ENCODE measurements at regions of chr17 and their contacts with region 1.

Region 1: GRCh38 chr17:65055348-65056261 is 935 bp downstream of the GNA13 start:
- DNase-seq: peak; percentile 56 to 58
- H3K4me3 ChIP-seq: peak overlapping the region; percentile 99
- H3K4me3 Mint-ChIP-seq: peak overlapping the region; percentile 98
- H3K27ac Mint-ChIP-seq: peak overlapping the region; percentile 92
- H3K4me1 ChIP-seq: peaks cover 15% of the 10 kb centered on the region; the same call in 1 of the 2 replicates
- H3K4me1 Mint-ChIP-seq: peaks cover 6% of the 10 kb centered on the region
- H3K27me3 ChIP-seq: no peaks in the 10 kb centered on the region
- H3K27me3 Mint-ChIP-seq: no peaks in the 10 kb centered on the region
- CTCF ChIP-seq: no peak

Region 2: DNA sequence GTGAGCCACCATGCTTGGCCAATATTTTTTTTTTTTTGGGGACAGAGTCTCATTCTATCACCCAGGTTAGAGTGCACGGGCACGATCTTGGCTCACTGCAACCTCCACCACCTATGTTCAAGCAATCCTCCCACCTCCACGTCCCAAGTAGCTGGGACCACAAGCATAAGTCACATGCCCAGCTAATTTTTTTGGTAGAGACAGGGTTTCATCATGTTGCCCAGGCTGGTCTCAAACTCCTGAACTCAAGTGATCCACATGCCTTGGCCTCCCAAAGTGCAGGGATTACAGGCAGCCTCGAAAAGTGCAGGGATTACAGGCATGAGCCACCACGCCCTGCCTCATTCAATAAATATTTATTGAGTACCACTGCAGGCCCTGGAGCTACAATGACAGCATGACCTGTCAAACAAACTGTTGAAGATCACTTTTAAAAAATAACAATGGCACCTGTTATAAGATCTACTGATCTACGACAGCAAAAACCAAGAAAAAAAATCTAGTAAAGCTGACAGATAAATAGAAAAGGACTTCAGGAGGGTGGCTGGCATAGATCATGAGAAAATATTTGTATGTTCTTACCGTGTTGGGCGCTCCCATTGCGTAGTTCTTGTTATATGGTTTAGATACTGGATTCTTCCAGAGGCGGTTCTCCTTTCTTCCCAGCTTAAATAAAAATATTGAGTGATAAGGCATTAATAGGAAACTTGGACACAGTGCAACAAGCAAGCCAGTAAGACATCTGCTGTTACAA is 472.5 kb before region 1 on chr17:
- CTCF ChIA-PET with region 1: no interaction called
- POLR2A ChIA-PET with region 1: no interaction called
- intact Hi-C with region 1: no loop called
- DNase-seq: no peak
- H3K4me3 ChIP-seq: no peak overlapping the region
- H3K4me3 Mint-ChIP-seq: no peak overlapping the region
- H3K27ac Mint-ChIP-seq: no peak overlapping the region
- H3K4me1 ChIP-seq: no peaks in the 10 kb centered on the region
- H3K4me1 Mint-ChIP-seq: no peaks in the 10 kb centered on the region
- H3K27me3 ChIP-seq: no peaks in the 10 kb centered on the region
- H3K27me3 Mint-ChIP-seq: no peaks in the 10 kb centered on the region
- CTCF ChIP-seq: no peak

Region 3: GRCh38 chr17:64773836-64774761 is 281.5 kb before region 1 on chr17:
- CTCF ChIA-PET with region 1: no interaction called
- POLR2A ChIA-PET with region 1: interaction called, 12 read pairs
- intact Hi-C with region 1: no loop called
- DNase-seq: peak; percentile 96 to 97
- H3K4me3 ChIP-seq: peak overlapping the region; percentile 47
- H3K4me3 Mint-ChIP-seq: peak overlapping the region; percentile 96
- H3K27ac Mint-ChIP-seq: peak overlapping the region; percentile 97
- H3K4me1 ChIP-seq: no peaks in the 10 kb centered on the region
- H3K4me1 Mint-ChIP-seq: no peaks in the 10 kb centered on the region
- H3K27me3 ChIP-seq: no peaks in the 10 kb centered on the region
- H3K27me3 Mint-ChIP-seq: no peaks in the 10 kb centered on the region
- CTCF ChIP-seq: peak; percentile 55 to 82

Region 4: DNA sequence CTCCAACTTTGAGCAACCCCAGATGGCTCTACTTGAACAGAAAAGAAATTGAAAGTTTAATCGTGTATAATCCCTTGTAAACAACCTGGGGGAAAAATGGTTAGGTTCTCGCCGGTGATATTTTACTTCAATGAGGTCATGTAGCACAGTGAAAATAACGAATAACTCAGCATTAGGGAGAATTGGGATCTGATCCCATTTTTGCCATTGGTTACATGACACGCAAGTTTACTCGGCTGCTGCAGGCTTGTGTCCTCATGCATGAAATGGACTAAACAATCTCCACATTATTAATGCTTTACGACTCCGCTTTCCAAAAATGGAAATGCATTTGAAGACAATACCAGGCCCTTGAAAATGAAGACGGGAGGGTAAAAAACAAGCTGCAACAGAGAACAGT is 90.8 kb before region 1 on chr17:
- CTCF ChIA-PET with region 1: no interaction called
- POLR2A ChIA-PET with region 1: no interaction called
- intact Hi-C with region 1: no loop called
- DNase-seq: no peak
- H3K4me3 ChIP-seq: peak overlapping the region; percentile 14; the same call in 1 of the 2 replicates
- H3K4me3 Mint-ChIP-seq: peak overlapping the region; percentile 80
- H3K27ac Mint-ChIP-seq: peak overlapping the region; percentile 45
- H3K4me1 ChIP-seq: no peaks in the 10 kb centered on the region; the same call in 1 of the 2 replicates
- H3K4me1 Mint-ChIP-seq: peaks cover 13% of the 10 kb centered on the region
- H3K27me3 ChIP-seq: no peaks in the 10 kb centered on the region
- H3K27me3 Mint-ChIP-seq: no peaks in the 10 kb centered on the region
- CTCF ChIP-seq: no peak

Region 5: GRCh38 chr17:64975329-64976087 is 80.1 kb before region 1 on chr17:
- CTCF ChIA-PET with region 1: no interaction called
- POLR2A ChIA-PET with region 1: interaction called, 9 read pairs
- intact Hi-C with region 1: loop called (anchors 2 kb)
- DNase-seq: peak; percentile 94 to 96
- H3K4me3 ChIP-seq: peak overlapping the region; percentile 89
- H3K4me3 Mint-ChIP-seq: peak overlapping the region; percentile 90
- H3K27ac Mint-ChIP-seq: peak overlapping the region; percentile 87
- H3K4me1 ChIP-seq: peaks cover 5% of the 10 kb centered on the region; the same call in 1 of the 2 replicates
- H3K4me1 Mint-ChIP-seq: peaks cover 11% of the 10 kb centered on the region
- H3K27me3 ChIP-seq: no peaks in the 10 kb centered on the region
- H3K27me3 Mint-ChIP-seq: no peaks in the 10 kb centered on the region
- CTCF ChIP-seq: peak in 1 of 2 experiments; percentile 4

Region 6: GRCh38 chr17:65088411-65089345 is 33.1 kb after region 1 on chr17:
- CTCF ChIA-PET with region 1: no interaction called
- POLR2A ChIA-PET with region 1: no interaction called
- intact Hi-C with region 1: no loop called
- DNase-seq: no peak
- H3K4me3 ChIP-seq: no peak overlapping the region
- H3K4me3 Mint-ChIP-seq: no peak overlapping the region
- H3K27ac Mint-ChIP-seq: no peak overlapping the region
- H3K4me1 ChIP-seq: no peaks in the 10 kb centered on the region
- H3K4me1 Mint-ChIP-seq: peaks cover 5% of the 10 kb centered on the region
- H3K27me3 ChIP-seq: no peaks in the 10 kb centered on the region
- H3K27me3 Mint-ChIP-seq: peaks cover 5% of the 10 kb centered on the region
- CTCF ChIP-seq: no peak

Region 7: DNA sequence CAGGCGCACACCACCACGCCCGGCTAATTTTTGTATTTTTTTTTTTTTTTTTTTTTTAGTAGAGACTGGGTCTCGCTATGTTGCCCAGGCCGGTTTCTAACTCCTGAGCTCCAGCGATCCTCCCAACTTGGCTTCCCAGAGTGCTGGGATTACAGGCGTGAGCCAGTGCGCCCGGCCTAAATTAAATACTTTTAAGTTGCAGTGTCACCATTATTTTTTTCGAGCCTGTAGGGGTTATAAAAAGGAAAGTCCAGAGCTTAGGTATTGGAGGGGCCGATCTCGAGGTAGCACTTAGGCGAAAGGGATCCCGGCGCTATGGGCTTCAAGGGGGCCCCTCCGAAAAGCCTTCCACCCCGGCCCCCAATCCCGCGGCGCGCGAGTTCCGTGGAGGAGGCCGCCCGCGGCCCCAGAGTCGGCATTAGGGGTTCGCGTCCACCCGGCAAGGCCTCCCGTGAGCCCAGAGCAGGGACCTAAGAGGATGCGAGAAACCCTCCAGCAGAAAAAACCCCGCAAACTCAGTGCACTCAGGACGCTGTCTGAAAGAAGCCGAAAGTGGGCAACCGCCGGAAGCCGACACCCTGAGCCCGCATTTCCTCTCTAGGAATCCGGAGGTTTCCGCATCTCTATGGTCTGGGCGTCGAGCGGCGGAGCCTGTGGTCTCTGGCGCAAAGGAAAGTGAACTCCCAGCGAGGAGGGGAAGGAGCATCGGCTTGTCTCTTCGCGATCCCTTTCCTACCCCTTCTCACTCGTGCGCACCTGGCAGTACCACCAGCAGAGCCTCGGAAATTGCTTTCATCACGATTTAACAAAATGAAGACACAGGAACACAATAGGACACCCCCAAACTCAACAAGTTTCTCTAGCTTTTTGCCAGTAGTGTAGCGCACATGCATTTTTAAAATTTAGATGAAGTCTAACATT is 67.5 kb after region 1 on chr17:
- CTCF ChIA-PET with region 1: no interaction called
- POLR2A ChIA-PET with region 1: interaction called, 10 read pairs
- intact Hi-C with region 1: no loop called
- DNase-seq: peak; percentile 93 to 94
- H3K4me3 ChIP-seq: peak overlapping the region; percentile 61
- H3K4me3 Mint-ChIP-seq: peak overlapping the region; percentile 89
- H3K27ac Mint-ChIP-seq: peak overlapping the region; percentile 88
- H3K4me1 ChIP-seq: no peaks in the 10 kb centered on the region
- H3K4me1 Mint-ChIP-seq: no peaks in the 10 kb centered on the region
- H3K27me3 ChIP-seq: no peaks in the 10 kb centered on the region
- H3K27me3 Mint-ChIP-seq: peaks cover 6% of the 10 kb centered on the region
- CTCF ChIP-seq: no peak

Region 8: GRCh38 chr17:65134035-65134434 is 78.4 kb after region 1 on chr17:
- CTCF ChIA-PET with region 1: no interaction called
- POLR2A ChIA-PET with region 1: no interaction called
- intact Hi-C with region 1: no loop called
- DNase-seq: no peak
- H3K4me3 ChIP-seq: no peak overlapping the region
- H3K4me3 Mint-ChIP-seq: no peak overlapping the region
- H3K27ac Mint-ChIP-seq: no peak overlapping the region
- H3K4me1 ChIP-seq: peaks cover 7% of the 10 kb centered on the region
- H3K4me1 Mint-ChIP-seq: peaks cover 6% of the 10 kb centered on the region
- H3K27me3 ChIP-seq: no peaks in the 10 kb centered on the region
- H3K27me3 Mint-ChIP-seq: peaks cover 14% of the 10 kb centered on the region
- CTCF ChIP-seq: no peak

Measured in Caco-2 (cell line).